GM12878 (cell line): ENCODE measurements at regions of chr4 and their contacts with region 1.

Region 1: DNA sequence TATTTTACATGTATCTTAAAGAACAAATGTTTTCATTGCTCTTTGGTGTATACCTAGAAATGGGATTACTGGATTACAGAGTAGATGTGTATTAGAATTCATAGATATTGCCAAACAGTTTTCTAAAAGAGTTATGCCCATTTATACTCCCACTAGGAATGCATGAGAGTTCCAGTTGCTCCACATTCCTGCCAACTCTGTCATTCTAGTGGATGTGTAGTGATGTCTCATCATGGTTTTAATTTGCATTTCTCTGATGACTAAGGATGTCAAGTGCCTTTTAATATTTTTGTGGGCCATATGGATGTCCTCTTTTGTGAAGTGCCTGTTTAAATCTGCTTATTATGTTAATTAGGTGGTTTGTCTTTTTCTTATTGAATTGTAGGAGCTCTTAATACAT is 65.6 kb upstream of the BMP2K start:
- DNase-seq: no peak
- ATAC-seq: no peak
- H3K4me3 ChIP-seq: no peak overlapping the region
- H3K27ac ChIP-seq: no peak overlapping the region
- H3K4me1 ChIP-seq: peaks cover 23% of the 10 kb centered on the region
- H3K27me3 ChIP-seq: no peaks in the 10 kb centered on the region
- CTCF ChIP-seq: no peak
- EP300 ChIP-seq: no peak
- POLR2A ChIP-seq: no peak
- RAD21 ChIP-seq: no peak

Region 2: GRCh38 chr4:78720994-78721677 is 10.6 kb after region 1 on chr4:
- CTCF ChIA-PET with region 1: interaction called, 5 read pairs
- POLR2A ChIA-PET with region 1: interaction called, 4 read pairs
- RAD21 ChIA-PET with region 1: interaction called, 3 read pairs
- SMC1A ChIA-PET with region 1: interaction called, 22 read pairs
- in situ Hi-C with region 1: no loop called
- intact Hi-C with region 1: no loop called
- DNase-seq: no peak
- ATAC-seq: peak; percentile 94
- H3K4me3 ChIP-seq: peak overlapping the region; percentile 25; the same call in 1 of the 2 replicates
- H3K27ac ChIP-seq: no peak overlapping the region
- H3K4me1 ChIP-seq: peaks cover 4% of the 10 kb centered on the region
- H3K27me3 ChIP-seq: no peaks in the 10 kb centered on the region
- CTCF ChIP-seq: no peak
- EP300 ChIP-seq: no peak
- POLR2A ChIP-seq: no peak
- RAD21 ChIP-seq: no peak